SK-N-SH (cell line): ENCODE measurements at regions of chr5 and their contacts with region 1.

Region 1: DNA sequence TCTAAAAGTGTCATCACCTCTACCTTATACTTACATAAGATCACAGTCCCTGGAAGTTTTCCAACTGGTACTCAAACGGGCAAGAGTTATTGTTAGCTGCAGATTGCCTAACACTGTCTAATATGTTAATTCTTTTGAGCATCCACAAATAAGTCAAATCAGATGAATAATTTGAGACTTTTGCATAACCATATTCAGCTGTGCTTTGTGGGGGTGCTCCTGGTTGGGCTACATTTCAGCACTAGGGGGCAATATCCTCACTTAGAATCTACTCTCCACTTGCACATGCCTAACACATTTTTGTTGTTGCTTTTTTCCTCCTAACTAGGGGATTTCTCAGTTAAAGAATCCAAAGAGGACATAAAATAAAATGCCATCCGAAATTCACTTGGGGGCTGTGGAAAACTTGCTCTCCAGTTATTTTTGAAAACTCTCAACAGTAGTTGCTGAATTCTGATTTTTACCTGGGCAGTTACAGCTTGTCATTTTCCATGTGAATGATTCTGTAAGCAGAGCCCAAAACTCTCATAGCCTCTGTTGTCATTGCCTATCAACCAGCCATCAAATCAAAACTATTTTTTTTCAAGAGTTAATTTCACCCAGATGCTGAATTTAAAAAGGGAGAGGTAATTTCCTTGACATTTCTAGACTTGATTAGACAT is 71.5 kb downstream of the TRIM36 start:
- DNase-seq: peak; percentile 63
- H3K4me3 ChIP-seq: no peak overlapping the region; a peak in 1 of 4 replicates
- H3K27ac ChIP-seq: no peak overlapping the region
- H3K4me1 ChIP-seq: no peaks in the 10 kb centered on the region; a peak in 2 of 4 replicates
- H3K27me3 ChIP-seq: no peaks in the 10 kb centered on the region; the same call in 1 of the 2 replicates
- CTCF ChIP-seq: peak; percentile 82
- EP300 ChIP-seq: no peak
- RAD21 ChIP-seq: peak; percentile 89

Region 2: GRCh38 chr5:115084246-115084793 is 13.9 kb before region 1 on chr5:
- CTCF ChIA-PET with region 1: interaction called, 13 read pairs
- POLR2A ChIA-PET with region 1: no interaction called
- DNase-seq: no peak
- H3K4me3 ChIP-seq: no peak overlapping the region
- H3K27ac ChIP-seq: no peak overlapping the region
- H3K4me1 ChIP-seq: no peaks in the 10 kb centered on the region
- H3K27me3 ChIP-seq: no peaks in the 10 kb centered on the region
- CTCF ChIP-seq: no peak
- EP300 ChIP-seq: no peak
- RAD21 ChIP-seq: no peak

Region 3: GRCh38 chr5:115116001-115116400 is 17.8 kb after region 1 on chr5:
- CTCF ChIA-PET with region 1: interaction called, 14 read pairs
- POLR2A ChIA-PET with region 1: no interaction called
- DNase-seq: no peak
- H3K4me3 ChIP-seq: no peak overlapping the region
- H3K27ac ChIP-seq: no peak overlapping the region
- H3K4me1 ChIP-seq: no peaks in the 10 kb centered on the region
- H3K27me3 ChIP-seq: no peaks in the 10 kb centered on the region
- CTCF ChIP-seq: no peak
- EP300 ChIP-seq: no peak
- RAD21 ChIP-seq: no peak

Region 4: DNA sequence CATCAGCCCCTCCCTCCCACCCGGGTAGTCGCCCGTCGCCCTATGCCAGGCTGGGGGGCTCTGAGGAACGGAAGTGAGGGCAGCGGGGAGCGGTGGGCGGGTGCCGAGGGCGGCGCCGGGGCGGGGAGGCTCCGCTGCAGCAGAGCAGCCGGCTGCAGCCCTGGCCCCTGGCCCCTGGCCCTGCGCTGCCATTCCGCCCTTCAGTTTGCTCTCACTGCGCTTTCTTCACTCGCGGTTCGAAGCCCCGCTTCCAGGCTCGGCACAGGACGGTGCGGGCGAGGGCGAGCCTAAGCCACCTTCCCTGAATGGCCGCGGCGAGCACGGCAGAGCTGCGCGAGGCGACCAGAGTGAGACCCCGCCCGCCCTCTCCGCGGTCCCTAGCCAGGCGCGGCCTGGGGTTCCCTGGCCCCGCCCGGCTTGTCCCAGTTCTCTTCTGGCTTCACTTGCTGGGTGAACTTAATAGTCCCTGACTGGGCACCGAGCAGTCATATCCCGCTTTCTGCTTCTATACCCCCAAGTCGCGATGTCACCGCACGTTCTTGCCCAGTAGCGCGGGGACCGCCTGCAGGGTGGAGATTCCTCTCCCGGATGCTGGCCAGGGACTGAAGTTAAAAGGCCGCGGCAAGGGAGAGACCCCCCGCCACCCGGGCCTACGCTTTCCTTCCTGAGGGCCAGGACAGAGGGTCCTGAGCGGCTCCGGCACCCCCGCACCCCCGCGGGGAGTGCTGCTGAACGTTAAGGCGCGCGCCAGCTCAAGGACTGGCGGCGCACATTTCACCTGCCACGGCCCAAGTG is 72.2 kb after region 1 on chr5:
- CTCF ChIA-PET with region 1: interaction called, 14 read pairs
- POLR2A ChIA-PET with region 1: interaction called, 3 read pairs
- DNase-seq: peak; percentile 78
- H3K4me3 ChIP-seq: peak overlapping the region; percentile 79 to 88
- H3K27ac ChIP-seq: peak overlapping the region in 1 of 2 experiments; percentile 77; a peak in 2 of 4 replicates
- H3K4me1 ChIP-seq: peaks cover 0 to 4% of the 10 kb centered on the region in 2 experiments; a peak in 2 of 4 replicates
- H3K27me3 ChIP-seq: peaks cover 52% of the 10 kb centered on the region; the same call in 1 of the 2 replicates
- CTCF ChIP-seq: no peak
- EP300 ChIP-seq: no peak
- RAD21 ChIP-seq: no peak

Region 5: DNA sequence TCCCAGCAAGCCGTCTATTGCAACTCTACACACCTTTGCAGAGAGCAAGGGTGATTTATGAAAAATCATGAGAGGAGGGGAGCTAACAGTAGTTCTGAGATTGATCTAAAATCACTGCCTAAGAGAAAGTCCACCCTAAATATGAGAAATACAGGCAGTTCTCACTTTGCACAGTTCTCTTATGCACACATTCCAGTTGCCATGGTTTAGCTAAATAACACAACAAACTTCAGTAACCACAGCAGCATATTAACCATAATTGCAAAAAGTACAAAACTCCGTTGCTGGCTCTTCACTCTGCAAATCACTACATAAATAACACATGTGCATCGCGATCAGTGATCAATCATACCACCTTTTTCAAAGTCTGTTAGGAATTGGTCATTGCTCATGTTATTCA is 133.4 kb after region 1 on chr5:
- CTCF ChIA-PET with region 1: interaction called, 11 read pairs
- POLR2A ChIA-PET with region 1: no interaction called
- DNase-seq: no peak
- H3K4me3 ChIP-seq: no peak overlapping the region
- H3K27ac ChIP-seq: no peak overlapping the region
- H3K4me1 ChIP-seq: no peaks in the 10 kb centered on the region
- H3K27me3 ChIP-seq: no peaks in the 10 kb centered on the region
- CTCF ChIP-seq: no peak
- EP300 ChIP-seq: no peak
- RAD21 ChIP-seq: no peak